ENCODE measurements at regions of chr16 and their contacts with region 1.

Region 1: DNA sequence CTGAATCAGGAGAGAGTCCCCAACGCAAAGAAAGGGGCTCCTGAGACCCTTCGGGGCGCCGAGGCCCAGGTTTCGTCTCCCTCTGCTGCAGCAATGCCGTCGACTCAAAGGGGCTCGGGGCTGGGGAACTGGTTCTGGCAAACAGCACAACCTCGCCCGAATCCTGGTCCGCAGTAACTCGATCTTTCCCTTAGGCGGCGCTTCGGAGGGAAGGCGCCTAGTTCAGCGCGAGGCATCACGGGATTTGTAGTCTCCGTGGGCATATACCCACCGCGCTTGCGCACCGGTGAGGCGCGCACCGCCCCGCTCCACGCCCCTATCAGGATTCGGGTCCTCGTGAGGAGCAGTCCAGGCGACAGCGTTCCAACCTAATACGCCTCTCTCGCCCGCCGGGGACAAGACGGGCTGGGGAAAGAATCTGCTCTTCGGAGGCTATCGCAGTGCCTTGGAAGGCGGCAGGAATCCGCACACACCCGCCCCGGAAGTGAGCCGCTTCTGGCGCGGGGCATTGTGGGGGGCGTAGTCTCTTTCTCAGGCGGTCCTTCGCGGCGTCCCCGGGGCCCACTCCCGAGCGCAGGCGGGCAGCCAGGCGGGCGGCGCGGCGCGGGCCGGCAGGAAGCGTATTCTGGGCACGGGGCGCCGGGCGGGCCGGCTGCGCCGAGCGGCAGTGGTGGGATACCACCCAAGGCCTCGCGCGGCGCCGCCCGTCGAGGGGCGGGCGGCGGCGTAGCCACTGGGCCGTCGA is at the start of gene THAP11:
- DNase-seq: peak; percentile 94
- H3K4me3 ChIP-seq: peak within 1 kb of the TSS; percentile 86 to 91
- H3K27ac ChIP-seq: peak within 1 kb of the TSS; percentile 100
- H3K4me1 ChIP-seq: peaks cover 15% of the 10 kb centered on the region
- H3K27me3 ChIP-seq: no peaks in the 10 kb centered on the region
- CTCF ChIP-seq: peak; percentile 82 to 98 (median 90)
- POLR2A ChIP-seq: no peak
- total RNA-seq, gene THAP11: 60.2 to 78.6 TPM

Region 2: DNA sequence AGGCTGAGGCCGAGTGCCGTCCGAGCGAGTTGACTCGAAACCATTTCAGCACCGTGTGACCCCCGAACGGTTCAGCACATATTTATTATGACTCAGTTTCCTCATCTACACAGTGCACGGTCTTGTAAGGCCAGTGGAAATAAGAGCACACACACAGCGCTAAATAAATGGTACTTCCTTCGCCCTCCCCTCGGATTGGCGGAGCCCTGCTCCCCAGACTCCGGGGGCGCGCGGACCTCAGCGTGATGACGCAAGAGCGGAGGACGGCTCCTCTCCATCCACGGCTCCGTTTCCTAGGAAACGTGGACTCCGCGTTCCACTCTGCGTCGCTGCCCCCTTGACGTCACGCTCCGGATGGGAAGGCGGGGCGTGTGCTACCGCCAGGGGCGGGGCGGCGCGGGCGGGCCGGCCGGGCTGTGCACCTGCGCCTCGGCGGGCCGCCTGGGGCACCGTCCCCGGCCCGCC is 181.3 kb before region 1 on chr16 and contains the start of gene PARD6A:
- intact Hi-C with region 1: loop called (anchors 5 kb)
- DNase-seq: peak; percentile 85
- H3K4me3 ChIP-seq: peak within 1 kb of the TSS; percentile 70 to 81
- H3K27ac ChIP-seq: peak within 1 kb of the TSS; percentile 80 to 96
- H3K4me1 ChIP-seq: peaks cover 4% of the 10 kb centered on the region
- H3K27me3 ChIP-seq: no peaks in the 10 kb centered on the region
- CTCF ChIP-seq: peak in 2 of 4 experiments; percentile 39 to 43
- POLR2A ChIP-seq: no peak
- total RNA-seq, gene PARD6A: 3.4 to 13.7 TPM

Region 3: DNA sequence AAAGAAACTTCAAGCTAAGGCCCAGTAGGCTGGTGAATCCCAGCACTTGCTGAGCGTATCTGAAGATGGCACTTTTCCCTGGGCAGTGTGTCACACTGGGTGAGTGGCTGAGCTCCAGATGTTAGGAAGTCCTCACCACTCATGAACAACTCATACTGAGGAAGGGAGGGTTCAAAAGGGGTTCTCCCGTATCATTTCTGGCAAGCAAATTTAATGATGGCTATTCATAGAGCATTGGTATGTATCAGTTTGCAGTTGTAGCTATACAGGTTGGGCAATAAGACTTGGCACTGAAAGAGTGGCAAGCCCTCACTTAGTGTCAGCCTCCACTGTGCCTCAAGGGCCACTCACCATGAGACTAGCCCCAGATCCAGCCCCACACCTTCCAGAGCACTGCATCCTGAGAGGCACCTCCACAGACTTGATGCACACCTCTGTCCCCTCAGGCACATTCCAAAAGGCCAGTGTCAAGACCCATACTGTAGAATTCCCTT is 133.5 kb before region 1 on chr16:
- intact Hi-C with region 1: no loop called
- DNase-seq: no peak
- H3K4me3 ChIP-seq: no peak overlapping the region
- H3K27ac ChIP-seq: no peak overlapping the region
- H3K4me1 ChIP-seq: no peaks in the 10 kb centered on the region
- H3K27me3 ChIP-seq: no peaks in the 10 kb centered on the region
- CTCF ChIP-seq: no peak
- POLR2A ChIP-seq: no peak

Region 4: GRCh38 chr16:67800338-67800926 is 41.5 kb before region 1 on chr16:
- intact Hi-C with region 1: no loop called
- DNase-seq: no peak
- H3K4me3 ChIP-seq: no peak overlapping the region
- H3K27ac ChIP-seq: no peak overlapping the region
- H3K4me1 ChIP-seq: peaks cover 11% of the 10 kb centered on the region
- H3K27me3 ChIP-seq: no peaks in the 10 kb centered on the region
- CTCF ChIP-seq: no peak
- POLR2A ChIP-seq: no peak

Region 5: GRCh38 chr16:67869653-67870052 is 27.7 kb after region 1 on chr16:
- intact Hi-C with region 1: loop called (anchors 2 kb)
- DNase-seq: no peak
- H3K4me3 ChIP-seq: no peak overlapping the region
- H3K27ac ChIP-seq: no peak overlapping the region
- H3K4me1 ChIP-seq: peaks cover 9% of the 10 kb centered on the region
- H3K27me3 ChIP-seq: no peaks in the 10 kb centered on the region
- CTCF ChIP-seq: no peak
- POLR2A ChIP-seq: no peak

Region 6: GRCh38 chr16:67910158-67910557 is 68.2 kb after region 1 on chr16:
- intact Hi-C with region 1: no loop called
- DNase-seq: no peak
- H3K4me3 ChIP-seq: no peak overlapping the region
- H3K27ac ChIP-seq: no peak overlapping the region
- H3K4me1 ChIP-seq: no peaks in the 10 kb centered on the region
- H3K27me3 ChIP-seq: no peaks in the 10 kb centered on the region
- CTCF ChIP-seq: no peak
- POLR2A ChIP-seq: no peak

Measured in prostate gland (tissue), 2 donors.